ENCODE measurements at regions of chr14 and their contacts with region 1.

Region 1: DNA sequence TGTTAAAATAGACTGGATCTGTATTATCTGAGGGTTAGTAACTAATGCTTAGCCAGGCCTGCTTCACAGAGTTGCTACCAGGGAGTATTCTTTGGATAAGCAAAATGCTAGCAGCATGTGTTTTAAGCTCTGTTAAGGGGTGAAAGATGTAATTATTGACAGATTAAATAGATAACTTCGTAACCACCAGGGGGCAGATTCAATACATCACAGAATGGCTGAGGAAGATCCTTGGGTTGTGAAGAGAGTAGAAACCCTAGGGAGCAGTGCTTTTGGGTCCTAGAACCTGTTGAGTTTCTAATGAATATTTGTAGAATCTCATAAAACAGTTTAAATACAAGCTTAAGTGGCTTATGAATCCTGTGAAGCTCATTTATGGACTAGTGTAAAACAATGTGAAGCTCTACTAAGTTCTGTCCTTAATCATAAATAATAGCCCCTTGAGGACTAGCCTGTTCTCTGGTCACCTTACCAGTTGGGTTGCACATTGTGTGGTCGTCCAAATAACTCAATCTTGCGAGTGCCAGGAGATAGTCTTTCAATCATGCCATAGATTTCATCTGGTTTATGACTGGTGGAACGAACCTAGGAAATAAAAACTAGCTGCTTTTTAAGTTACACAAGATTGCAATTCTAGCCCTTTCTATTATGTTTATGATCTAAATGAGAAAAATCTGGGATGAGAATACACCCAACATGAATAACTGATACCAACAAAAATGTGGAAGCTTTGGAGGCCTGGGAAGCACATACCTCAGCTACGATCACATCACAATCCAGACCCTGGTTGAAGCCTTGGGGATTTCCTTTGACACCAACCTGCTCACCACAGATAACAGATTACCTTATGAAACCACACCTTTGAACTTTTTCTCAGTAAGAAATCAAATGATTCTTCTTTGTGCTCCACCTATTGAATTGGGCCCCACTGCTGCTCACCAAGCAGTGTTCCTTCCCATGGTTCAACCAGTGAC is 12.3 kb downstream of the METTL3 start:
- DNase-seq: peak in 3 of 5 donors; percentile 10 to 53 (median 39)
- H3K4me3 ChIP-seq: no peak overlapping the region
- H3K4me3 Mint-ChIP-seq: no peak overlapping the region
- H3K27ac ChIP-seq: no peak overlapping the region
- H3K27ac Mint-ChIP-seq: peak overlapping the region in 7 of 8 donors; percentile 8 to 85 (median 68)
- H3K4me1 ChIP-seq: peaks cover 13% of the 10 kb centered on the region
- H3K4me1 Mint-ChIP-seq: peaks cover 13 to 27% (median 25%) of the 10 kb centered on the region in 3 donors
- H3K27me3 ChIP-seq: no peaks in the 10 kb centered on the region
- H3K27me3 Mint-ChIP-seq: no peaks in the 10 kb centered on the region

Region 2: GRCh38 chr14:21384494-21384851 is 114.4 kb before region 1 on chr14:
- CTCF ChIA-PET with region 1: no interaction called
- POLR2A ChIA-PET with region 1: no interaction called
- DNase-seq: no peak
- H3K4me3 ChIP-seq: peak overlapping the region; percentile 89
- H3K4me3 Mint-ChIP-seq: peak overlapping the region; percentile 88 to 99 (median 96)
- H3K27ac ChIP-seq: peak overlapping the region; percentile 91
- H3K27ac Mint-ChIP-seq: peak overlapping the region; percentile 96 to 100 (median 99)
- H3K4me1 ChIP-seq: peaks cover 25% of the 10 kb centered on the region
- H3K4me1 Mint-ChIP-seq: peaks cover 41 to 50% (median 43%) of the 10 kb centered on the region in 3 donors
- H3K27me3 ChIP-seq: no peaks in the 10 kb centered on the region
- H3K27me3 Mint-ChIP-seq: no peaks in the 10 kb centered on the region

Region 3: GRCh38 chr14:21414137-21414631 is 84.7 kb before region 1 on chr14:
- CTCF ChIA-PET with region 1: no interaction called
- POLR2A ChIA-PET with region 1: no interaction called
- DNase-seq: no peak
- H3K4me3 ChIP-seq: no peak overlapping the region
- H3K4me3 Mint-ChIP-seq: no peak overlapping the region
- H3K27ac ChIP-seq: no peak overlapping the region
- H3K27ac Mint-ChIP-seq: peak overlapping the region in 1 of 8 donors; percentile 60
- H3K4me1 ChIP-seq: no peaks in the 10 kb centered on the region
- H3K4me1 Mint-ChIP-seq: peaks cover 0 to 2% (median 0%) of the 10 kb centered on the region in 3 donors
- H3K27me3 ChIP-seq: no peaks in the 10 kb centered on the region
- H3K27me3 Mint-ChIP-seq: no peaks in the 10 kb centered on the region

Region 4: DNA sequence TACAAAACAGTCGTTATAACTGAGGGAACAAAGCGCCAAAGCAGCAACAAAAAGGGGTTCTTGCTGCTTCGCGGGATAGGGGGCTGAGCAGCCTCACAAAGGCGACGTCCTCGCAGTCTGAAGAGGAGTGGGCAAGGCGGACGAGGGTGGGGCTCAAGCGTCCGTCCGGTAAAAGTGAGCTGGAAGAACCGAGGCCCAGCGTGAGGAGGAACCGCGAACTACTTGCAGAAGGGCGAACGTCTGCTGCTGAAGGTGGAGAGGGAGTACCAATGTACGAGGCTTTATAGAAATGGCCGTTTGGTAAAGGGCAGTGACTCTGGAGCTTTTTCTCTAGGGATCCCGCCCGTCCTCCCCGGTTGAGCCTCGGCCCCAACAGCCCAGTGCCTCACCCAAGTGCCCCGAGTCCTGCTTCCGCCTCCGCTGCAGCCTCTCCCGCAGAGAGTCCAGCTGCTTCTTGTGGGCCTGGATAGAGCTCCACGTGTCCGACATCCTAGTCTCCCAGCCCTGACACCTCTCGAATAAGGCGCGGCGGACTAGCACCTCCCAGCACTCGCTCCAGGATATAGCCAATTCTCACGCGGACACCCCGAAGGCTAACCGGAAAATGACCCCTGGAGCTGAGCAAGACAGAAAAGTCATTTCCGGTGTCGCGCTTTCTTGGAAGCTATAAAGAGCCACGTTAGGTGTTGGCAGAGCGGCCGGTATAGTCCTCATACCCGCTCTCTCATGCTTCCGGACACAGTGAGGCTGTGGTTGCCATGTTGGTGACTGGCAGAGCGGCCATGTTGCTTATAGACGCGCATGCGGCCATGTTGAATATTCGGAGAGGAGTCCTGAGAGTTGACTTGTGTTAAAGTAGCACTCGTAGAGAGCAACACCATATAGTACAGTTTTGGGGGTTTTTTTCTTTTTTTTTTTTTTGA is 12.2 kb after region 1 on chr14 and contains the start of gene METTL3:
- CTCF ChIA-PET with region 1: interaction called, 42 read pairs
- POLR2A ChIA-PET with region 1: interaction called, 4 read pairs
- DNase-seq: peak; percentile 88 to 97 (median 91)
- H3K4me3 ChIP-seq: peak within 1 kb of the TSS; percentile 100
- H3K4me3 Mint-ChIP-seq: peak within 1 kb of the TSS; percentile 97 to 100 (median 99)
- H3K27ac ChIP-seq: peak within 1 kb of the TSS; percentile 95
- H3K27ac Mint-ChIP-seq: peak within 1 kb of the TSS; percentile 92 to 99 (median 99)
- H3K4me1 ChIP-seq: peaks cover 18% of the 10 kb centered on the region
- H3K4me1 Mint-ChIP-seq: peaks cover 31 to 46% (median 45%) of the 10 kb centered on the region in 3 donors
- H3K27me3 ChIP-seq: no peaks in the 10 kb centered on the region
- H3K27me3 Mint-ChIP-seq: peaks cover 0 to 3% of the 10 kb centered on the region in 2 donors
- total RNA-seq, gene METTL3: 54.1 to 58.9 TPM

Region 5: DNA sequence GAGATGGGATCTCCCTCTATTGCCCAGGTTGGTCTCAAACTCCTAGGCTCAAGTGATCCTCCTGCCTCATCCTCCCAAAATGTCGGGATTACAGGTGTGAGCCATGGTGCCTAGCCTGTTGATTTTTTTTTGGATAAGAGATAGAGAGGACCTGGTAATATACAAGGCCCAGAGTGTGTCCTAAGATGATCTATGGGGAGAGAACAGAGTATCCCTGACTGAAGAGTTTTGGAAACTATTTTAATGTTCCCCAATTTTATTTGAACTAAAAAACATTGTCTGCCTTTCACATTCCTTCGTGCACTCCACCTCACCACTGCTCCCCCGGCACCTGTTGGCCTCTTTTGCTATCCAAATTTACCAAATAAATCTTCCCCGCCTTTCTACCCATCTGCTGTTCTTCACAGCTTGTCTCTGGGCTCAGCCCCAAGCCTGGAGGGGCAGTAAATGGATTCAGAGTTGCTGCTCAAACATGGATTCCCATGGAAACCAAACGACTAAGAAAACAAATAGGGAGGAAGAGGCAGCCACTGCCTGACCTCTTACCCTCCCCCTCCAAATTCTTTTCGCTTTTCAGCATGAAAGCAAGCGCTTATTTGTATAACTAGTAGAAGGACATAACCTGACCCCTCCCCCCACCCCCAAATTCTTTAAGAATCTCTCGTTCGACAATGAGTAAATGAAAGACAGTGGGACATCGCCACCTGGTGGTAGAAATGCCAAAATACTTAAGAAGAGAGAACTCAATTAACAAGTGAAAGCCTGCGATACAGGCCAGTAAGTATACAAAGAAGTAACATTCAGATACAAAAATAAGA is 58.5 kb after region 1 on chr14:
- CTCF ChIA-PET with region 1: interaction called, 25 read pairs
- POLR2A ChIA-PET with region 1: no interaction called
- DNase-seq: peak; percentile 54 to 81 (median 68)
- H3K4me3 ChIP-seq: peak overlapping the region; percentile 28
- H3K4me3 Mint-ChIP-seq: peak overlapping the region in 6 of 7 donors; percentile 7 to 87 (median 54)
- H3K27ac ChIP-seq: no peak overlapping the region
- H3K27ac Mint-ChIP-seq: peak overlapping the region in 5 of 8 donors; percentile 2 to 82 (median 31)
- H3K4me1 ChIP-seq: peaks cover 4% of the 10 kb centered on the region
- H3K4me1 Mint-ChIP-seq: peaks cover 4 to 9% (median 7%) of the 10 kb centered on the region in 3 donors
- H3K27me3 ChIP-seq: no peaks in the 10 kb centered on the region
- H3K27me3 Mint-ChIP-seq: peaks cover 0 to 1% of the 10 kb centered on the region in 2 donors